Mammary epithelial cell (primary cell): ENCODE measurements at regions of chrX and their contacts with region 1.

Region 1: DNA sequence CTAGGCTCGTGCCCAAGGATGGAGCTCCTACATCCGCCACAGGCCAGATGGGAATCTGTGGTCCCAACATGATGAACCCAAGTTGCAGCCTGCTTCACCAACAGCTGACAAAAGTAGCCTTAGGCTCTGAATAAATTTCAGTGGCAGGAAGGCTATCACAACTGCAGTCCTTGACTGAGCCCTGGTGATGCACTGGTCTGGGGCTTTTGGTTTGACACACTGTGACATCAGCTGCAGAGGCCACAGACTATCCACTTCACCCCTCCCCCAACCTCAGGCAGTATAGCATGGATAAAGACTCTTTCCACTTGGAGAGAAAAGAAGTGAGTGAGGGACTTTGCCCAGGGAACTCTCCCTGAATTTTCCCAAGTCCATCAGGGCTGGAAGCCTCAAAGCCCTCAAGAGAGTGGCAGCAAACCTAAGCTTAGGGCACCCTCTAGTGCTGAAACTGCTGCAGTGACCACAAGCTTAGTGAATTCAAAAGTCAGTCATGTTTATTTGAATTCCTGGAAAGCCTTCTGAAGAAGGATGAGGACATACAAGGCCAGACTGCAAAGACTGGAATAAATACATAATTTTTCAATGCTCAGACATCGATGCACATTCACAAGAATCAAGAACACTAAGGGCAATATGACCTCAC is 135.0 kb upstream of the TENT5D start:
- DNase-seq: peak; percentile 19
- H3K4me3 ChIP-seq: no peak overlapping the region
- H3K27ac ChIP-seq: no peak overlapping the region
- H3K4me1 ChIP-seq: no peaks in the 10 kb centered on the region
- H3K27me3 ChIP-seq: no peaks in the 10 kb centered on the region
- CTCF ChIP-seq: peak; percentile 58 to 74

Region 2: DNA sequence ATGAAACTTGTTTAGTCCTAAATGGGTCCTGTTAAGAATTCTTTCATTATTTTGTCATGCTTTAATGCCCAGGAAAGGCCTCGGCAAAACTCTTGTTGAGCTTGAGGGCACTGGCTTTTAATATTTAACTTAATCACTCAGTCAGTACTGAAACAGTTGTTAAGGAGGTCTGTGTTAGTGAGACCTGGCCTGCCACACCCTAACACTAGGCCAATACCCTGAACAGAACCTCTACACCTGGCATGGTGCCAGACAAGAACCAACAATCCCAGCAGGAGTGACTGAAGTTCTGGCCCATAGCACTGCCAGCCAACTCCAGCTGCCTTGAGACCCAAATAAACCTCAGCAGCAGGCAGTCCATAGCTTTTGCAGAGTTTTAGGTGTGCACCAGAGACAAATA is 832.4 kb before region 1 on chrX:
- CTCF ChIA-PET with region 1: no interaction called
- dilution Hi-C with region 1: no loop called
- in situ Hi-C with region 1: no loop called
- intact Hi-C with region 1: loop called (anchors 10 kb)
- DNase-seq: no peak
- H3K4me3 ChIP-seq: no peak overlapping the region
- H3K27ac ChIP-seq: no peak overlapping the region
- H3K4me1 ChIP-seq: no peaks in the 10 kb centered on the region
- H3K27me3 ChIP-seq: no peaks in the 10 kb centered on the region
- CTCF ChIP-seq: no peak

Region 3: DNA sequence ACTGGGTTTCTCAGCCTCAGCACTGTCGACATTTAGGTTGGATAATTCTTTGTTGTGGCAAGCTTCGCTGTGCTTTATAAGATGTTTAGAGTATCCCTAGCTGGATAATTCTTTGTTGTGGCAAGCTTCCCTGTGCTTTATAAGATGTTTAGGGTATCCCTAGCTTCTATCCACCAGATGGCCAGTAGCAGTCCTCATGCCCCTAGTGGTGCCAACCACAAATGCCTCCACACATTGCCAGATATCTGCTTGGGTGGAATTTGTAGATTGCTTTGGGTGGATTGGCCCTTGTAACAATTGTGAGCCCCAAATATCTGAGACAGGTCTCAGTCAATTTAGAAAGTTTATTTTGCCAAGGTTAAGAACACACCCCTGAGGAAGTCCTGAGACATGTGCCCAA is 118.2 kb after region 1 on chrX:
- CTCF ChIA-PET with region 1: no interaction called
- dilution Hi-C with region 1: no loop called
- in situ Hi-C with region 1: no loop called
- intact Hi-C with region 1: no loop called
- DNase-seq: no peak
- H3K4me3 ChIP-seq: no peak overlapping the region
- H3K27ac ChIP-seq: no peak overlapping the region
- H3K4me1 ChIP-seq: no peaks in the 10 kb centered on the region
- H3K27me3 ChIP-seq: no peaks in the 10 kb centered on the region
- CTCF ChIP-seq: no peak

Region 4: GRCh38 chrX:80578517-80579105 is 293.4 kb after region 1 on chrX:
- CTCF ChIA-PET with region 1: no interaction called
- dilution Hi-C with region 1: no loop called
- in situ Hi-C with region 1: no loop called
- intact Hi-C with region 1: loop called (anchors 1 kb)
- DNase-seq: peak; percentile 12
- H3K4me3 ChIP-seq: no peak overlapping the region
- H3K27ac ChIP-seq: no peak overlapping the region
- H3K4me1 ChIP-seq: no peaks in the 10 kb centered on the region
- H3K27me3 ChIP-seq: no peaks in the 10 kb centered on the region
- CTCF ChIP-seq: peak; percentile 57 to 65

Region 5: GRCh38 chrX:80648023-80648422 is 362.8 kb after region 1 on chrX:
- CTCF ChIA-PET with region 1: no interaction called
- dilution Hi-C with region 1: no loop called
- in situ Hi-C with region 1: no loop called
- intact Hi-C with region 1: loop called (anchors 10 kb)
- DNase-seq: no peak
- H3K4me3 ChIP-seq: no peak overlapping the region
- H3K27ac ChIP-seq: no peak overlapping the region
- H3K4me1 ChIP-seq: no peaks in the 10 kb centered on the region
- H3K27me3 ChIP-seq: no peaks in the 10 kb centered on the region
- CTCF ChIP-seq: peak; percentile 48 to 56